Motor neuron (in vitro differentiated cells): ENCODE measurements at regions of chr11 and their contacts with region 1.

Region 1: GRCh38 chr11:36492724-36493304 is 17.3 kb downstream of the TRAF6 start:
- ATAC-seq: peak in 2 of 8 experiments; percentile 11 to 29
- H3K4me3 ChIP-seq: no peak overlapping the region
- H3K27ac ChIP-seq: no peak overlapping the region
- H3K4me1 ChIP-seq: no peaks in the 10 kb centered on the region

Region 2: DNA sequence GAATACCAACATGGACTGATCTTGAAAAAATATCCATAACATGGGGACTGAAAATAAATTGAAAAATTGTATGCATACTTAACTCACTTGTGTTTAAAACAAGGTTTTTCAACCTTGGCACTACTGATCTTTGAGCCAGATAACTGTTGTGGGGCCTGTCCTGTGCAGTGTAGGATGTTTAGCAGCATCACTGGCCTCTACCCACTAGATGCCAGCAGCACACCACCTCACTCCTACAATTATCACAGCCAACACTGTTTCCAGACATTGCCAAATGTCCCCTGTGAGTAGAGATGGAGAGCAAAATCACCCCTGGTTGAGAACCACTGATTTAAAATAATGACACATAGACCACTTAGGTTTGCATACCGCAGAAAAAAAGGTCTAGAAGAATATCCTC is 1028.5 kb before region 1 on chr11:
- in situ Hi-C with region 1: loop called in 1 of 9 experiments (anchors 25 kb)
- ATAC-seq: peak in 4 of 8 experiments; percentile 50 to 94 (median 68)
- H3K4me3 ChIP-seq: no peak overlapping the region
- H3K27ac ChIP-seq: no peak overlapping the region
- H3K4me1 ChIP-seq: peaks cover 0 to 4% of the 10 kb centered on the region in 2 donors

Region 3: DNA sequence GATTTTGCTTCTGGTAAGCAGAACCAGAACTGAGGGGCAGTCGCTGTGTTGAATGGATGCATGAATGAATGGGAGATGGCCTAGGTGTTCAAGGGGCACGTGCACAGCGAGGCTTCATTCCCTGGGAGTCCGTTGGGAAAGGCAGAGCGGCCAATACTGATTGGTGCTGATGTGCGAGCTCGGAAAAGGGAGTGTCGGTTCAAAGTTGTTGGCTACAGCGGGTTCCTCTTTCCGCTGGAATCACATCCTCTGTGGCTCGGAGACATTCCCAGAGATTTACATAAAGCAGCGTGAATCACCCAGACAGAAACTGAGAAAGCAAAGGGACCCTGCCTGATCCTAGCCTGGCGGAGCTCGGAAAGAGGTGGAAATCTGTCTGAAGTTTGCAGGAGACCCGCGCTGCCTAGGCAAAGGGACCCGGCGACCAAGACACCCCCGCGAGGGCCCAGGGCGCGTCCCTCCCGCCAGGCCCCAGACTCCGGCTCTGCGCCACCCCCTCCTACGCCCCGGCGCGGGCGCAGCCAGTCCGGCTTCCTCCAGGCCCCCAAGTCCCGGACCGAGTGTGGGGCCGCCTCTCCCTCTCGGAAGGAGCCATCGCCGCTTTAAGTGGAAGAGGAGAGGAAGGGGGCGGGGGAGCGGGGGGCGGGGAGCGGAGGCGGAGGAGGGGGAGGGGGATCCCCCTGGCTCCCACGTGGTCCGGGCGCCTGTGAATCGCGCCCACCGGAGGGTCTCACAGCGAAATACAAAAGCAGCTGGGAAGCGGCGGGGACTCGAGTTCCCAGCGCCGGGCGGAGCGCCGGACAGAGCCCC is 874.9 kb before region 1 on chr11 and contains the start of gene FJX1:
- in situ Hi-C with region 1: loop called in 4 of 9 experiments (anchors 10 to 25 kb)
- ATAC-seq: peak; percentile 60 to 76 (median 70)
- H3K4me3 ChIP-seq: peak within 1 kb of the TSS; percentile 58 to 95 (median 91)
- H3K27ac ChIP-seq: peak within 1 kb of the TSS; percentile 86 to 97
- H3K4me1 ChIP-seq: peaks cover 19 to 24% of the 10 kb centered on the region in 2 donors
- total RNA-seq, gene FJX1: 5.9 to 254 (median 19.8) TPM

Region 4: GRCh38 chr11:35800970-35801953 is 691.6 kb before region 1 on chr11:
- in situ Hi-C with region 1: loop called in 2 of 9 experiments (anchors 25 kb)
- ATAC-seq: peak in 1 of 8 experiments; percentile 93
- H3K4me3 ChIP-seq: no peak overlapping the region
- H3K27ac ChIP-seq: no peak overlapping the region
- H3K4me1 ChIP-seq: peaks cover 0 to 10% of the 10 kb centered on the region in 2 donors

Region 5: DNA sequence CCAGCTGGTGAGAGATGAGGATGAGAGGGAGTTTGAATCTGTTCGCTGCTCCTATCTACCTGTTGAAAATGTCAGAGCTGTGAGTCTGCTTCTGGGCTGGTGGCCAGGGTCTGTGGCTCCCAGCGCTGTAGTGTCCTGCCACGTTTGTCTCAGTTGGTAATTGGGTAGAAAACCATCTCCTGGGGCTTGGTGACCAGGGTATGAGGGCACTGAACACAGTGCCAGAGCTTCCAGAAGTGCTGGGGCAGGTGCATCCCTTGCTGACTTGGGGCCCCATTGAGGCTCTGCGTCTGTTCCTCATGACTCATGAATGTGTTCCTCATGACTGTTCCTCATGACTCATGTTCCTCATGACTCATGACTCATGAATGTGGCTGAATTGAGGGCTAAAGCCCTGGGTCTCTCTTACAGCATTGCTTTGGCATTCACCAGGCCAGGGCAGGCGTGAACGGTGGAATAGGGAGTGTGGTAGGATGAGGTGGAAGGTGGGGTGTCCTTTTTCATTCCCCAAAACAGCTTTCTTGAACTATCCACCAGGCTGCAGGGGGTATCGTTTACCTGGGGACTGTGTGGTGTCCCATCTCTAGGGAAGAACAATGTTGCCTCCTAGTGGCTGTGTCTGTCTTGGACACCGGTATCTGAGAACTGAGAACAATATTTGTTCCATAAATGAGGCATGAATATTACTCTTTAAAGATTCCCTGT is 343.1 kb before region 1 on chr11:
- in situ Hi-C with region 1: loop called in 1 of 9 experiments (anchors 25 kb)
- ATAC-seq: peak; percentile 93 to 98 (median 96)
- H3K4me3 ChIP-seq: no peak overlapping the region
- H3K27ac ChIP-seq: peak overlapping the region in 1 of 2 donors; percentile 69
- H3K4me1 ChIP-seq: peaks cover 25 to 42% of the 10 kb centered on the region in 2 donors

Region 6: GRCh38 chr11:36289226-36289852 is 203.5 kb before region 1 on chr11 and contains the start of gene COMMD9:
- in situ Hi-C with region 1: loop called in 1 of 9 experiments (anchors 25 kb)
- ATAC-seq: peak; percentile 92 to 99 (median 98)
- H3K4me3 ChIP-seq: peak within 1 kb of the TSS; percentile 47 to 73 (median 60)
- H3K27ac ChIP-seq: peak within 1 kb of the TSS; percentile 63 to 78
- H3K4me1 ChIP-seq: peaks cover 5% of the 10 kb centered on the region in 2 donors
- total RNA-seq, gene COMMD9: 26.4 to 66.8 (median 43.7) TPM

Region 7: DNA sequence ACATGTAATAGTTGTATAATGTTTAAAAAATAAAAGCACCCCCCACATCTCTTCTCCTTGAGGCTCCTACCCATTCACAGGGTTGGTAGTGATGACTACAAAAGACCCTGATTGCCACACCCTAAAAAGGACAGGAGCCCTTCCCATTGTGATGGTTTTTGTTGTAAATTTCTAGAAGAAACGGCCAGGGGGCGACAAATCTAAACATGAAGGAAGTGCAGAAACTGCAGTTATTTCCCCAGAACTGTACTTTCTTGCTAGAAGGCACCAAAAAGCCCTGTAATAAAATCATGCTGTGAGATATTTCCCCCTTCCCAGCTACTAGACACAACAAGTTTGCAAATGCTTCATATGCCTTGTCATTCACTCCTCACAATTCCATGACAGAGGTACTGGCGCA is 185.9 kb before region 1 on chr11:
- in situ Hi-C with region 1: loop called in 1 of 9 experiments (anchors 25 kb)
- ATAC-seq: peak in 1 of 8 experiments; percentile 42
- H3K4me3 ChIP-seq: no peak overlapping the region
- H3K27ac ChIP-seq: no peak overlapping the region
- H3K4me1 ChIP-seq: no peaks in the 10 kb centered on the region